Ascending aorta (tissue), 2 donors: ENCODE measurements at regions of chr9 and their contacts with region 1.

Region 1: GRCh38 chr9:124005372-124005771 is 6.2 kb upstream of the LHX2 start:
- DNase-seq: no peak
- H3K4me3 ChIP-seq: no peak overlapping the region
- H3K27ac ChIP-seq: no peak overlapping the region
- H3K4me1 ChIP-seq: peaks cover 0 to 3% of the 10 kb centered on the region in 2 donors
- H3K27me3 ChIP-seq: peaks cover 17% of the 10 kb centered on the region
- CTCF ChIP-seq: no peak

Region 2: DNA sequence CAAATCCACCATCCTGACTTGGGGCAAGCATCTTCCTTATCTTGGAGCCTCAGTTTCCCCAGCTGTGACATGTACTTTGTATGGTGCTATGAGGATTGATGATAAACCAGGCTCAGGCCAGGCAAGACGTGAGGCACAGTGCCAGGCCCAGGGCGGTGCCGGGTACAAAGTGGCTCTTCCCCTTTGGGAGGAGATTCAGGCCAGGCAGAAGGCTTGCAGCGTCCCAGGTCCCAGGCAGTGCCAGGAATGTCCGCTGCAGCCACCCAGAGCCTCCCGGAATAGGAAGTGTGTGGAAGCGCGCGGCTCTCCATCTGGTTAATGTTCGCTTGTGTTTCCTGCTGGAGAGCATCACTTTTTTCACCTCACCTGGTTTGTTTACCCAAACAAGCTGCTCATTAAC is 62.8 kb before region 1 on chr9:
- intact Hi-C with region 1: no loop called
- DNase-seq: no peak
- H3K4me3 ChIP-seq: no peak overlapping the region
- H3K27ac ChIP-seq: no peak overlapping the region
- H3K4me1 ChIP-seq: no peaks in the 10 kb centered on the region
- H3K27me3 ChIP-seq: no peaks in the 10 kb centered on the region
- CTCF ChIP-seq: no peak

Region 3: DNA sequence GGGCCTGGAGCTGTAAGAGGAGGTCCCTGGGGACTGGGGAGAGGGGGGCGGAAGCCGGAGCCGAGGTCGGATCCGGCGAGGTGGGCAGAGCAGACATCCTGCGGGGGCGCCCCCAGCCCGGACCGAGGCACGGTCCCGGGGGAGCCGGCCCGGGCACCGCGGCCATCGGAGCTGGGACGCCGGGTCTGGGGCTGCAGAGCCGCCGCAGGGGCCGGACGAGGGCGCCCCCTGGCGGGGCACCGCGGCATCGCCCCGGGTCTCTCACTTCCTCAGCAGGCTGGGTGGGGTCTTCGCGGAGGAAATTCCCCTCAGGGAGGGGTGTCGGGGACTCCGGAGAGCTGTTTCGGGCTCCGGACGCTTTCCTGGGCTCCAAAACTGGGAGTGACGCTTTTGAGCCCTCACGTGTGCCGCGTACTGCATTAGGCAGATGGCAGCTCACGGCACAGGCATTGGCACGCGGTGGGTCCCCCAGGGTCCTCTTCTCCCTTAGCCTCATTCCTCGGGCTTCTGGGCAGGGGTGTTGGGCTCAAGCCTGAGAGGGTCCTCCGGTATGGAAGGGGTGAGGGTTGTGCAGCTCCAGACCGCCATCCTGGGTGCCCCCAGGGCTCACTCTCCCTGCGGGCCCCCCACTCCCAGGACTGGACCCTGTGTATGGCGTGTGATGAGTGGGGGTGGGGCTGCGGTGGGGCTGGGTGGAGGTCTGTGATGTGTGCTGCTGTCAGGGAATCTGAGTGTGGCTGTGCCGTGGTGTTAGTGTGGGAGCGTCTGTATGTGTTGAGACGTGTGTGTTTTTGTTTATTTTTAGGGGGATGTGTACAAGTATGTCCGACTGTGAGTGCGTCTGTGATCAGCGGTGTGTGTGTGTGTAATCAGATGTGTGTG is 35.8 kb after region 1 on chr9:
- intact Hi-C with region 1: loop called (anchors 1 kb)
- DNase-seq: no peak
- H3K4me3 ChIP-seq: peak overlapping the region; percentile 48 to 58
- H3K27ac ChIP-seq: no peak overlapping the region
- H3K4me1 ChIP-seq: peaks cover 4 to 27% of the 10 kb centered on the region in 2 donors
- H3K27me3 ChIP-seq: peaks cover 8% of the 10 kb centered on the region
- CTCF ChIP-seq: peak; percentile 67 to 89 (median 81)